ENCODE measurements at regions of chr1 and their contacts with region 1.

Region 1: DNA sequence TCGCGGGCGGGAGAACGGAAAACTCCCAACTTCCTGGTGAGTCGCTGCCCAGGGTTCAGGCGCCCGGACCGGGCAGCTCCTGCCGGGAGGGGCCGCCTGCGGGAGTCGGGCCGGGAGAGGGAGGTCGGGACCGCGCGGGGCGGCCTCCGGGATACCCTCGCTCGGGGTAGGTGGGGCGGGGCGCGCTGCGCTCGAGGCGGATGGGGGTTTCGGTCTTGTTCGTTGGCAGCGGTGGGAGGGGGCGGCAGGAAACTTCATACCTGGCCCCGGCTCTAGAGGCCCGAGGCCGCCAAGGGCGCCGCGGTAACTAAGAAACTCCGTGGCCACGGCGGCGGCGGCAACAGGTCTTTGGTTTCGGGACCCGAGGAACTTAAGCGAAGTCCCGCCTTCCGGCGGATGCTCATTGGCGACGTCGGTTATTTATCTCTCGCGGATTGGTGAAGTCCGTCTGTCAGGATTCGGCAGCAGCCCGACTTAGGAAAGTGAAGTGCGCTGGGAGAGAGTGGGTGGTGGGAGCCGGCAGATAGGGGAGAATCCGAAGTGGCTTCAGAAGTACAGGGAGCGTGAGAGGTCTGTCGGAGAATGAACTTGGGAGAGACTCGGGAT is 546 bp downstream of the NEK7 start:
- DNase-seq: peak; percentile 73
- ATAC-seq: peak; percentile 50
- H3K4me3 Mint-ChIP-seq: peak overlapping the region; percentile 98
- H3K27ac Mint-ChIP-seq: peak overlapping the region; percentile 98
- H3K4me1 Mint-ChIP-seq: peaks cover 49% of the 10 kb centered on the region
- H3K27me3 Mint-ChIP-seq: no peaks in the 10 kb centered on the region
- CTCF ChIP-seq: no peak

Region 2: DNA sequence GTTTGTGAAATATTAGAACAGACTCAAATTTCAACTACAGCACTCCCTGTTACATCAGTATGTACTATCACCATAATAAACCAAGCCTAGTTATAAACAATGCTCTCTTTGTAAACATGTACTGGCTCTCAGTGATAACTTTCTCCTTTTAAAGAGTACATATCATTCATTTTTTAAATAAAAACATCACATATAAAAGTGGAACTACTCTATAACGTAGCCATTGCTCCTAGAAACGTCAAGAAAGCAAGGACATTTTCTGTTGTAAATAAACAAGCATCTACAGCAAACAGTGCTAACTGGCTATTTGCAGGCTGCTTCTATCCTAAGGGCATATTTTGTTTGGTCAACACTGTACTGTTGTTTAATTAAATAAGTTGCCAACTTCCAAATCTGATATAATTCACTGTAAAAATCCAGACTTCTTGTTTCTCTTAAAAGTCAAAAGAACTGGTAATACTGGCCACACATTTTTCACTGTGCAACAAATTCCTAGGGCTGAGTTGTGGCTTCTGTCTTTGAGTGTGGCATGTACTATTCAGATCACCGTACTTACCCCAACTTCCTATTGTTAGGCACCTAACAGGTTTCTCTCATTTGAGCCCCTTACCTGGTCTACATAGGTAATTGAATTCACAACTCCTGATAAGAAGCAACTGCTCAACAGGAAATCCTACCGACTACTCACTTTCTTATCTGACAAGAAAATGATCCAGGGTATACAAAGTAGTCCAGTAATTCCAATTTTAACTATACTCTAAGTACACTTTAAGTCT is 494.0 kb before region 1 on chr1:
- CTCF ChIA-PET with region 1: no interaction called
- POLR2A ChIA-PET with region 1: no interaction called
- intact Hi-C with region 1: no loop called
- DNase-seq: no peak
- ATAC-seq: no peak
- H3K4me3 Mint-ChIP-seq: no peak overlapping the region
- H3K27ac Mint-ChIP-seq: no peak overlapping the region
- H3K4me1 Mint-ChIP-seq: peaks cover 6% of the 10 kb centered on the region
- H3K27me3 Mint-ChIP-seq: no peaks in the 10 kb centered on the region
- CTCF ChIP-seq: no peak

Region 3: DNA sequence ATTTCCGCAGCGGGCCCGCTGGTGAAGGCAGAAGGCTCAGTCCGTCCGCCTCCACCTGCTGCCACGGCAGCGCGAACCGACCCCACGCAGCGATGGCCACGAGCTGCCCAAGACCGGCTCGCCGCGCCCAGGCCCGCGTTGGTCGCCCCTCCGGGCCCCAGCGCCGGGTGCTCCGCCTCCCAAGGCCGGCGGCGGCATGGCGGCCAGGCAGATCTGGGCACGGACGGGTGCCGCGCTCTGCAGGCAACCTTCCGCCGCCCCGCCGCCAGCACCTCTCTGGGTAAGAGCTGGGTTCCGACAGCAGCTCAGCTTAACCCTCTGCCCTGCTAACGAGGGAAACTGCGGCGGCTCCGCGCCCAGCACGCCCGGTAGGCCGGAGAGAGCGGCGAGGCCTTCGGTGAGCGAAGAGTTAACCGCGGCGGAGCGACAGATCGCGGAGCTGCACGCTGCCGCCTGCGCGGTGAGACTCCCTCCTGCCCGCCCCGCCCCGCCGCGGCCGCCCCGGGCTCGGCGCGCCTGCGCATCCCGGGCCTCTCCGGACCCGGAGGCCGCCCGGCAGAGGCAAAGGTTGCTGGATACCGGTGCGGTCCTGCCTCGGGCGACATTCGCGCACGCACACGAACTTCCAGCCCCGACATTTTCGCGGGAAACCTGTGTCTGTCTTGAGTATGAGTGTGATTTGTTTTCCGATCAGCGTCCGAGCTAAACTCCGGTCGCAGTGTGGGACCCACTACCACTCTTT is 254.7 kb before region 1 on chr1 and contains the start of gene C1orf53:
- CTCF ChIA-PET with region 1: no interaction called
- POLR2A ChIA-PET with region 1: no interaction called
- intact Hi-C with region 1: loop called (anchors 5 kb)
- DNase-seq: peak; percentile 83
- ATAC-seq: peak; percentile 92
- H3K4me3 Mint-ChIP-seq: peak within 1 kb of the TSS; percentile 90
- H3K27ac Mint-ChIP-seq: peak within 1 kb of the TSS; percentile 67
- H3K4me1 Mint-ChIP-seq: peaks cover 14% of the 10 kb centered on the region
- H3K27me3 Mint-ChIP-seq: peaks cover 41% of the 10 kb centered on the region
- CTCF ChIP-seq: no peak
- total RNA-seq, gene C1orf53: 0.81 and 1.2 TPM in 2 replicates

Region 4: DNA sequence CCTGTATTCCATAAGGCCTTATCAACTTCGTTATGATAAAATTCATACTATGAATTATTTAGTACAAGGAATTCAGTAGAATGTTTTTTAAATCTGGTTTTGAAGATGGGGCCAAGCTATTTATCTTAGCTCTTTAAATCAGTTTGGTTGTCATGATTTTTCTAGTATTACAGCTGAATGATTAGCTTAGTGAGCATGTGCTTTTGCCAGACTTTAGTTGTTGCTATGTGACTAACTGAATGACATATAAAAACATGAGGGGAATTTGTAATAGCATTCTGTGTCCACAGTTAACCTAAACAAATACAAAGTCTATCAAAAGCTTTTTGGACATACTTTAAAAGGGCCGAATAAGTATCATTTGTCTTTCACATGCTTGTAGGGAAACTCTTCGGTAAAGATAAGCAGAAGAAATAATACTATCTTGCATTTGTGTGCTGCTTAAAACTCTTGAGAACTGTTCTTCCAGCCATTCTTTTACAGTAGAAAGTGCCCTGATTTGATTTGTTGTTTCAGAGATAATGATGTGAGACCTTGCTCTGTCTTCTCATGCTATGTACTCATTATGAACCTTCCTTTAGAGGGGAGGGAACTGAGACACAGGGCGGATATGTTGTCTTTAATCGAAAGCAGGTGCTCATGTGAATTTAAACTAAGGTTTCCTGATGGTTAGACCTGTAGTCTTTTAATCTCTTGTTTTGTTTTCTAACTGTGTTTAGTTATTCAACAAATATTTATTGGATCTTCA is 18.3 kb after region 1 on chr1:
- CTCF ChIA-PET with region 1: interaction called, 4 read pairs
- POLR2A ChIA-PET with region 1: interaction called, 46 read pairs
- intact Hi-C with region 1: loop called (anchors 1 kb)
- DNase-seq: no peak
- ATAC-seq: peak; percentile 74
- H3K4me3 Mint-ChIP-seq: peak overlapping the region; percentile 53
- H3K27ac Mint-ChIP-seq: peak overlapping the region; percentile 74
- H3K4me1 Mint-ChIP-seq: peaks cover 83% of the 10 kb centered on the region
- H3K27me3 Mint-ChIP-seq: no peaks in the 10 kb centered on the region
- CTCF ChIP-seq: no peak

Region 5: DNA sequence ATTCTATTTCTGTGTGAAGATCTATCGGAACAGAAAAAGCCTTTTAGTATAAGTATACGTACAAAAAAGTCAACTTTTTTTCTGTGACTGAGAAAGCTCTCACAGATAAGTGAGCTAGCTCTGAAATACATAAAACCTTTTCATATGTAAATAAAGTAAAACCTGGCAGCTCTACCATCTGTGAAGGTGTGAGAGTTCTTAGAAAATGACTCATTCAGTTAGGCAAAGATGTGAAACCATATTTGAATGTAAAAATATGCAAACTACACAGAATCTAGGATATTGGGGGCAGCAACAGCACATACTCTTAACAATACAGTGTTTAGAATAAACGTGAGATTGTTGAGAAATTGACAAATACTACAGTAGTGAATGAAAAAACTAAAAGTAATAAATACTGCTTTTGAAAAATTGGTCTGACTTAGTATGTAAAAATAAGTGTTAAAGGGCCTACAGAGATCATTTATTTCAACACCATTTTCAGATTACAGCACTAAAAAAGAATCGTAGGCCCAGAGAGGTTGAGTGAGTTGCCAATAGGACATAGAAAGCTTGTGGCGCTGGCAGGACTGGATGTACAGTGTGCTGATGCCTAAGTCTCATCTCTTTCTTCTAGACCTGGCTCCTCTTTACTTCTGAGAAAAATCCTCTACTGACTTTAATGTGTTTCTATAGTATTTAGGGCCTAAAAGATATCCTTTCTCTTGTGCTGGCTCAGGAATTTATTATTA is 363.3 kb after region 1 on chr1:
- CTCF ChIA-PET with region 1: no interaction called
- POLR2A ChIA-PET with region 1: no interaction called
- intact Hi-C with region 1: loop called (anchors 2 kb)
- DNase-seq: no peak
- ATAC-seq: peak; percentile 70
- H3K4me3 Mint-ChIP-seq: peak overlapping the region; percentile 69
- H3K27ac Mint-ChIP-seq: peak overlapping the region; percentile 81
- H3K4me1 Mint-ChIP-seq: peaks cover 63% of the 10 kb centered on the region
- H3K27me3 Mint-ChIP-seq: no peaks in the 10 kb centered on the region
- CTCF ChIP-seq: no peak

Region 6: GRCh38 chr1:198598796-198599321 is 441.5 kb after region 1 on chr1:
- CTCF ChIA-PET with region 1: no interaction called
- POLR2A ChIA-PET with region 1: no interaction called
- intact Hi-C with region 1: loop called (anchors 5 kb)
- DNase-seq: peak; percentile 40
- ATAC-seq: peak; percentile 76
- H3K4me3 Mint-ChIP-seq: peak overlapping the region; percentile 90
- H3K27ac Mint-ChIP-seq: peak overlapping the region; percentile 99
- H3K4me1 Mint-ChIP-seq: peaks cover 90% of the 10 kb centered on the region
- H3K27me3 Mint-ChIP-seq: no peaks in the 10 kb centered on the region
- CTCF ChIP-seq: no peak

Region 7: DNA sequence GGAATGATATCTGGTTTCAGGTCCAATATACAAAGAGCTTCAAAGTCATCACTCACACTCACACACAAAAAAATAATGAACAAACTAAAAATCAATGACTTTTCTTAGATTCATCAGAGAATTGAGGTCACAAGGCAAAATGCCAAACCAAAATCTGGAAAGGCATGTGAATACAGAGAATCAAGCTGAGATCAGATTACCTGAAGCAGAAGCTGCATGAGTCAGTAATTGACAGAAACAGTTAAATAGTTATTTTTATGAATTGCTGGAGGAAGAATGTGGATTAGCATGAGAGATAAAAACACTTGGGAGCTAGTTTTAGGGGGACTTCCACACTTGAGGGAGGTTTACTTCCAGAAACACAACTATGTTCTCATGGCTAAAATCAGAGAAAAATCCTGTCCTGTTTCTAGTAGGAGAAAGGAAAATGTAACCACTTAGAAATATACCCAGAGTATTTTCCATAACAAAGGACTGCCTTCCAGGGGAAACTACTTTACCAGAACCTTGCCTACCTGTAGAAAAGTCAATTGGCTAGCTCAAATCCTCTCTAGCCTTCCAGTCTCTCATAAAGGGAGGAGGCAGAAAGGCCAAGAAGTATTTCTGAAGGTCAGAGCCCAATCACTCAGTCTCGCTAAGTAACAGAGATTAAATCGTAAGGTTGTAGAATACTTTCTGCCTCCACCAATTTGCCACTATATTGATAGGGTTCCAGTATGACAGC is 1333.6 kb after region 1 on chr1:
- CTCF ChIA-PET with region 1: no interaction called
- POLR2A ChIA-PET with region 1: no interaction called
- intact Hi-C with region 1: loop called (anchors 10 kb)
- DNase-seq: no peak
- ATAC-seq: no peak
- H3K4me3 Mint-ChIP-seq: no peak overlapping the region
- H3K27ac Mint-ChIP-seq: peak overlapping the region; percentile 60
- H3K4me1 Mint-ChIP-seq: peaks cover 36% of the 10 kb centered on the region
- H3K27me3 Mint-ChIP-seq: no peaks in the 10 kb centered on the region
- CTCF ChIP-seq: no peak